Heart left ventricle (tissue), 16 donors: ENCODE measurements at regions of chr5 and their contacts with region 1.

Region 1: DNA sequence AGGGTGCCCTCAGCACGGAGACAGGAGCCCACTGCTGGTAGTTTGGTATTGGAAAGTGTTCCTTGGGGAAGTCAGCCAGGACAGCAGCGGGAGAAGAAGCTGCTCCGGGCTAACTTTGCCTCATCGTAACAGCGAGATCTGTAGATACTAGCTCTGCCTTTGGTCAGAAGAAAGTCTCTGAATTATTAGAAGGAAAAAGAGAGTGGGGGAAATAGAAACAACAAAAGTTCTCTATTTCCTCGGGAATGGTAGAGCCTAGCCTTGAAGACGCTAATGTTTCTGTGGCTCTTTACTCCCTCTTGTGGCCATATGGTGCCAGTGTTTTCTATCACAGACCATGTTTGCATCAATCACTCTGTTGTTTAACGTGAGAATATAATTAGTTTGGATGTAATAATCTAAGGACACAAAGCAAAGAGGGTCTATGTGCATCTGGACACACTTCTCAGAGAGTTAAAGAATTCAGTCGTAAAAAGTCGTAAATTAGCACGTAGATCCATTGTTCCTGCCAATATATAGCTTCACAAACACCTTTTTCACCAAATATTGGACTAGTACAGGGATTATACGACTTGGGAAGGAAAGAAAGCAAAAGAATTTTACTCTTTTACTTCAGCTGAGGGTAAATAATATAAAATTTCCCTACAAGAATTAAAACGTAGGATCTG is 40.2 kb upstream of the HSD17B4 start:
- DNase-seq: peak in 4 of 5 donors; percentile 33 to 52 (median 50)
- ATAC-seq: peak; percentile 90 to 97 (median 94)
- H3K4me3 ChIP-seq: peak overlapping the region in 11 of 12 donors; percentile 28 to 67 (median 51)
- H3K27ac ChIP-seq: peak overlapping the region in 8 of 12 donors; percentile 1 to 77 (median 54)
- H3K4me1 ChIP-seq: peaks cover 0 to 29% (median 0%) of the 10 kb centered on the region in 12 donors
- H3K27me3 ChIP-seq: peaks cover 0 to 14% (median 0%) of the 10 kb centered on the region in 9 donors
- CTCF ChIP-seq: peak; percentile 90 to 97 (median 94)
- POLR2A ChIP-seq: no peak

Region 2: GRCh38 chr5:118987988-118988865 is 423.8 kb before region 1 on chr5 and contains the start of gene DTWD2:
- intact Hi-C with region 1: loop called (anchors 1 to 5 kb)
- DNase-seq: peak; percentile 92 to 97 (median 96)
- ATAC-seq: peak; percentile 98 to 100 (median 99)
- H3K4me3 ChIP-seq: peak within 1 kb of the TSS; percentile 62 to 93 (median 82)
- H3K27ac ChIP-seq: peak within 1 kb of the TSS; percentile 75 to 98 (median 96)
- H3K4me1 ChIP-seq: peaks cover 0 to 23% (median 12%) of the 10 kb centered on the region in 12 donors
- H3K27me3 ChIP-seq: no peaks in the 10 kb centered on the region
- CTCF ChIP-seq: peak; percentile 80 to 98 (median 91)
- POLR2A ChIP-seq: peak in 1 of 2 donors; percentile 62
- total RNA-seq, gene DTWD2: 6.1 to 16.0 (median 12.2) TPM

Region 3: DNA sequence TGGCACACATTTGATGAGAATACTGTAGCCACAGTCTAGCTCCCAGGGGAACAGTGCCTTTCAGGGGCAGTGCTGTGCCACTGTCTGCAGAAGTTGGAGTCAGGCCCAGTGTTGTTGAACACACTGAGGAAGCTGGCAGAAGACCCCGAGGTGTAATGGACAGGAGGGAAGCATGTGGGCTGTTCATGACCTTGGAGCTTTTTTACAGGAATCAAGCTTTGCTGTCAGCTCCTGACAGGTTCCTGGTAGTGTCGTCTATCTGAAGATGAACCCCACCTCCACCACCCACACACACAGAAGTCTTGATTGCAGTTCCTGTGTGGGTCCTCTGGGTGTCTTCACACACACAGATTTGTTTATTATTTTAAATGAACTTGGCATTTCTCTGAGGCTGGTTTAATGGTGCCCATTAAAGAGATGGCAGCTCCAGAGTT is 96.5 kb before region 1 on chr5:
- intact Hi-C with region 1: loop called in 9 of 10 experiments (anchors 2 to 10 kb)
- DNase-seq: peak in 1 of 5 donors; percentile 45
- ATAC-seq: peak; percentile 32 to 72 (median 64)
- H3K4me3 ChIP-seq: no peak overlapping the region
- H3K27ac ChIP-seq: peak overlapping the region in 1 of 12 donors; percentile 54
- H3K4me1 ChIP-seq: peaks cover 0 to 78% (median 0%) of the 10 kb centered on the region in 12 donors
- H3K27me3 ChIP-seq: no peaks in the 10 kb centered on the region
- CTCF ChIP-seq: peak in 10 of 12 donors; percentile 6 to 41 (median 22)
- POLR2A ChIP-seq: no peak

Region 4: GRCh38 chr5:119328753-119329602 is 83.1 kb before region 1 on chr5:
- intact Hi-C with region 1: loop called in 2 of 10 experiments (anchors 5 to 10 kb)
- DNase-seq: no peak
- ATAC-seq: peak in 1 of 4 donors; percentile 21
- H3K4me3 ChIP-seq: no peak overlapping the region
- H3K27ac ChIP-seq: peak overlapping the region in 1 of 12 donors; percentile 86
- H3K4me1 ChIP-seq: peaks cover 0 to 95% (median under 1%) of the 10 kb centered on the region in 12 donors
- H3K27me3 ChIP-seq: no peaks in the 10 kb centered on the region
- CTCF ChIP-seq: no peak
- POLR2A ChIP-seq: no peak

Region 5: DNA sequence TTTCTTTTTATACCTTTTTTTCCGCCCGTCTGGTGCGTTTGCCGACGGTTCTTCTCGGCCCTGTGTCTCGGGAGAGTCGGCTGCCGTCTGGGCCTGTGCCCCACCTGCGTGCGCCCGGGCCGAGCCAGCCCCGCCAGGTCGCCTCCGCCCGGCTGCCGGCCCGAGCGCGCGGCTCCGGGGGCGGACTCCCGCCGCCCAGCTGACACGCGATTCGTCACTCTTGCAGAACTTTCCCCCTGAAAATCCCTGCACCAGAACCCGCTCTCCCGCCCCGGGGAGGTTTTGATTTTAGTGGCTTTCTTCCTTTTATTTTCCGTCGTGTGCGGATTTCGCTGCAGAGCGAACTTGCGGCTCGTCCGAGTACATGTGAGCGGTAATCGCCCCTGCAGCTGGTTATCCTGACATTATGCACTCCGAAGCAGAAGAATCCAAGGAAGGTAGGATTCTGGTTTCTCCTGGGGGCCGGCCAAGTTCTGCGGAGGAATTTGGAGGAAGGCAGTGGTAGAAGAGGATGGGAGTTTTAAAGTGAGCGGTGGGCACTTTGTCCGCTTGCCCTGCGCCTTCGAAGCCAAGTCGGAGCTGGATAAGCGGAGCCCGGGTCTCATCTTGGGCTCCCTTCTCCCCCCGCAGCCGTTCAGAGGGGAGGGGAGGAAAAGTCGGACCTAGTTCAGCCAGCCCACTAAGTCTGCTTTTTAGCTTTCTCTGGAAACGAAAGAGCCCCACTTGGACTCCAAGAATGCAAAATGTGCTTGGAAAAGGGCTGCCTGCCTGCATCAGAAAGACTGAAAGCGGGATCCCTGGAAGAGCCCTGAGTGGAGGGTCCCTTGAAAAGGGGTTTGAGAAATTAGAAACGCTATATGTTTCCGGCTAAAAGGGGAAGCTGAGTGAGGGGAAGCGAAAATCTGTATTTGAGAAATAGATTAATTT is 56.1 kb before region 1 on chr5 and contains the start of gene TNFAIP8:
- intact Hi-C with region 1: loop called in 1 of 10 experiments (anchors 5 kb)
- DNase-seq: peak; percentile 62 to 81 (median 71)
- ATAC-seq: peak; percentile 69 to 88 (median 87)
- H3K4me3 ChIP-seq: peak within 1 kb of the TSS; percentile 31 to 84 (median 63)
- H3K27ac ChIP-seq: peak within 1 kb of the TSS in 10 of 12 donors; percentile 12 to 93 (median 60)
- H3K4me1 ChIP-seq: peaks cover 0 to 69% (median 7%) of the 10 kb centered on the region in 12 donors
- H3K27me3 ChIP-seq: no peaks in the 10 kb centered on the region
- CTCF ChIP-seq: no peak
- POLR2A ChIP-seq: peak in 1 of 2 donors; percentile 14
- total RNA-seq, gene TNFAIP8: 3.6 to 30.8 (median 13.9) TPM